PC-3 (cell line): ENCODE measurements at regions of chr4 and their contacts with region 1.

Region 1: GRCh38 chr4:54322818-54323417 is 93.8 kb downstream of the PDGFRA start:
- DNase-seq: peak; percentile 88
- ATAC-seq: peak; percentile 88
- H3K4me3 ChIP-seq: no peak overlapping the region
- H3K27ac ChIP-seq: no peak overlapping the region
- H3K4me1 ChIP-seq: peaks cover 14% of the 10 kb centered on the region
- H3K27me3 ChIP-seq: no peaks in the 10 kb centered on the region
- CTCF ChIP-seq: peak; percentile 96

Region 2: DNA sequence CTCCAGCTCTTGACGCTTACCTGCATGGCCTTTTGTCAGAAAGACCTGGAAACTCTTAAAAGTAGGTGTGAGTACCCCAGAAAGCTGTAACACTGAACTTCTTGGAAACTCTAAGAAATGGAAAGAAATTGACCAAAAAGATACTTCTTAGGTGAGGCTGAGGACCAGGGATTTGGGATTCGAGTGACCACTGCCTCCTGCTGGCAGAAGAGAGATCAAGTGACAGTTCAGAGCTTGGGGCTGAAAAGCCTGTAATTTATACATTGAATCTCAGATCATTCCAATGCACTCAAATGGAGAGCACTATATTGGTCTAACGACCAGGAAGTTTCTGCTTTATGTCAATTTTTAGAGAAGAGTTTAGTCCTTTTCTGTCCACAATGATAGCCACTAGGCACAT is 110.8 kb after region 1 on chr4:
- CTCF ChIA-PET with region 1: no interaction called
- POLR2A ChIA-PET with region 1: no interaction called
- intact Hi-C with region 1: loop called (anchors 1 kb)
- DNase-seq: peak; percentile 59
- ATAC-seq: peak; percentile 43; the same call in 1 of the 2 replicates
- H3K4me3 ChIP-seq: no peak overlapping the region
- H3K27ac ChIP-seq: no peak overlapping the region
- H3K4me1 ChIP-seq: no peaks in the 10 kb centered on the region
- H3K27me3 ChIP-seq: peaks cover 80% of the 10 kb centered on the region
- CTCF ChIP-seq: peak; percentile 88

Region 3: GRCh38 chr4:54440394-54441136 is 117.6 kb after region 1 on chr4:
- CTCF ChIA-PET with region 1: no interaction called
- POLR2A ChIA-PET with region 1: no interaction called
- intact Hi-C with region 1: loop called (anchors 1 kb)
- DNase-seq: peak; percentile 66
- ATAC-seq: no peak
- H3K4me3 ChIP-seq: peak overlapping the region; percentile 3; the same call in 1 of the 2 replicates
- H3K27ac ChIP-seq: no peak overlapping the region
- H3K4me1 ChIP-seq: no peaks in the 10 kb centered on the region
- H3K27me3 ChIP-seq: peaks cover 54% of the 10 kb centered on the region
- CTCF ChIP-seq: peak; percentile 85

Region 4: GRCh38 chr4:54961357-54961975 is 638.5 kb after region 1 on chr4:
- CTCF ChIA-PET with region 1: no interaction called
- POLR2A ChIA-PET with region 1: no interaction called
- intact Hi-C with region 1: loop called (anchors 1 kb)
- DNase-seq: peak; percentile 66
- ATAC-seq: peak; percentile 88
- H3K4me3 ChIP-seq: no peak overlapping the region
- H3K27ac ChIP-seq: no peak overlapping the region
- H3K4me1 ChIP-seq: no peaks in the 10 kb centered on the region
- H3K27me3 ChIP-seq: peaks cover 17% of the 10 kb centered on the region
- CTCF ChIP-seq: peak; percentile 93

Region 5: DNA sequence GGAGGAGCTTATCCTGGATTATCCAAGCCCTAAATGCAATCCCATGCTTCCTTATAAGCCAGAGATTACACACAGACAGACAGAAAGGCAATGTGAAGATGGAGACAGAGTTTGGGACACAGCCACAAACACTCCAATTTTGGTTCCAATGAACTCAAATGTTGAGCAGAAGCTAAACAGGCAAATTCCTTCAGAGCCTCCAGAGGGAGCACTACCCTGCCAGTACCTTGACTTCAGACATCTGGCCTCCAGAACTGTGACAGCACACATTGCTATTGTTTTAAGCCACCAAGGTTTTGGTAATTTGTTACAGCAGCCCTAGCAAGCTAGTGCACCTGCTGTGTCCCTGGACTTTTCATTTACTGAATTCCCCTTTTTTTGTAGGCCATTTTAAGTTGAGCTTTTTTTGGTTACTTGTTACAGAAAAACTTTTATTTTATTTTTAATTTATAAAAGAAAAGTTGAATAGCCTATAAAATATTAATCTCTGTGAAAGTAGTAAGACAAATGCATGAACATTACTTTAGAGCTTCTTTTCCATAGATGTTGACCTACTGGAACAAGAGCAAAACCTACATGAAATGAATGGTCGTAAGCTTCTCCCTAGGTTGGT is 989.7 kb after region 1 on chr4:
- CTCF ChIA-PET with region 1: no interaction called
- POLR2A ChIA-PET with region 1: no interaction called
- intact Hi-C with region 1: loop called (anchors 5 kb)
- DNase-seq: peak; percentile 77
- ATAC-seq: peak; percentile 90
- H3K4me3 ChIP-seq: no peak overlapping the region
- H3K27ac ChIP-seq: no peak overlapping the region
- H3K4me1 ChIP-seq: no peaks in the 10 kb centered on the region
- H3K27me3 ChIP-seq: no peaks in the 10 kb centered on the region
- CTCF ChIP-seq: peak; percentile 91

Region 6: GRCh38 chr4:55736605-55737183 is 1413.8 kb after region 1 on chr4:
- CTCF ChIA-PET with region 1: no interaction called
- POLR2A ChIA-PET with region 1: no interaction called
- intact Hi-C with region 1: loop called (anchors 5 kb)
- DNase-seq: peak; percentile 64
- ATAC-seq: no peak
- H3K4me3 ChIP-seq: no peak overlapping the region
- H3K27ac ChIP-seq: no peak overlapping the region
- H3K4me1 ChIP-seq: peaks cover 15% of the 10 kb centered on the region
- H3K27me3 ChIP-seq: no peaks in the 10 kb centered on the region
- CTCF ChIP-seq: peak; percentile 77